Activated CD4-positive, alpha-beta memory T cell treated with anti-CD3 and anti-CD28 coated beads for 36 hours (primary cell): ENCODE measurements at regions of chr12 and their contacts with region 1.

Region 1: GRCh38 chr12:14239350-14239934 is 126.0 kb upstream of the ATF7IP start:
- DNase-seq: peak; percentile 62
- H3K4me3 Mint-ChIP-seq: peak overlapping the region; percentile 69
- H3K27ac Mint-ChIP-seq: peak overlapping the region; percentile 74
- H3K4me1 Mint-ChIP-seq: peaks cover 24% of the 10 kb centered on the region
- H3K27me3 Mint-ChIP-seq: no peaks in the 10 kb centered on the region

Region 2: GRCh38 chr12:14185427-14186192 is 53.8 kb before region 1 on chr12:
- CTCF ChIA-PET with region 1: interaction called, 15 read pairs
- POLR2A ChIA-PET with region 1: no interaction called
- intact Hi-C with region 1: no loop called
- DNase-seq: peak; percentile 24
- H3K4me3 Mint-ChIP-seq: no peak overlapping the region
- H3K27ac Mint-ChIP-seq: no peak overlapping the region
- H3K4me1 Mint-ChIP-seq: no peaks in the 10 kb centered on the region
- H3K27me3 Mint-ChIP-seq: peaks cover 6% of the 10 kb centered on the region

Region 3: DNA sequence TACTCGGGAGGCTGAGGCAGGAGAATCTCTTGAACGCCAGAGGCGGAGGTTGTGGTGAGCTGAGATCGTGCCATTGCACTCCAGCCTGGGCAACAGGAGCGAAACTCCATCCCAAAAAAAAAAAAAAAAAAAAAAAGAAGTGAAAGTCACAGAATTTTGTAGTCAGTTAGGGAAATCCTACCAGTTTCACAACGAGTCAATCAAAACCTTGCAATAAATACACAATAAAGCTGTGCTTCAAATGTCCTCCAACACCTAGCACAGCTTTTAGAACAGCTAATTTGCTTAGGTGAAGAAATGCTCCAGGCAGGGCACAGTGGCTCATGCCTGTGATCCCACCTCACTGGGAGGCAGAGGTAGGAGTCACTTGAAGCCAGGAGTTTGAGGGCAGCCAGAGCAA is 13.3 kb after region 1 on chr12:
- CTCF ChIA-PET with region 1: interaction called, 19 read pairs
- POLR2A ChIA-PET with region 1: interaction called, 3 read pairs
- intact Hi-C with region 1: loop called (anchors 1 kb)
- DNase-seq: no peak
- H3K4me3 Mint-ChIP-seq: no peak overlapping the region
- H3K27ac Mint-ChIP-seq: no peak overlapping the region
- H3K4me1 Mint-ChIP-seq: peaks cover 36% of the 10 kb centered on the region
- H3K27me3 Mint-ChIP-seq: no peaks in the 10 kb centered on the region

Region 4: GRCh38 chr12:14322403-14322802 is 83.0 kb after region 1 on chr12:
- CTCF ChIA-PET with region 1: no interaction called
- POLR2A ChIA-PET with region 1: no interaction called
- intact Hi-C with region 1: no loop called
- DNase-seq: no peak
- H3K4me3 Mint-ChIP-seq: no peak overlapping the region
- H3K27ac Mint-ChIP-seq: no peak overlapping the region
- H3K4me1 Mint-ChIP-seq: no peaks in the 10 kb centered on the region
- H3K27me3 Mint-ChIP-seq: no peaks in the 10 kb centered on the region

Region 5: DNA sequence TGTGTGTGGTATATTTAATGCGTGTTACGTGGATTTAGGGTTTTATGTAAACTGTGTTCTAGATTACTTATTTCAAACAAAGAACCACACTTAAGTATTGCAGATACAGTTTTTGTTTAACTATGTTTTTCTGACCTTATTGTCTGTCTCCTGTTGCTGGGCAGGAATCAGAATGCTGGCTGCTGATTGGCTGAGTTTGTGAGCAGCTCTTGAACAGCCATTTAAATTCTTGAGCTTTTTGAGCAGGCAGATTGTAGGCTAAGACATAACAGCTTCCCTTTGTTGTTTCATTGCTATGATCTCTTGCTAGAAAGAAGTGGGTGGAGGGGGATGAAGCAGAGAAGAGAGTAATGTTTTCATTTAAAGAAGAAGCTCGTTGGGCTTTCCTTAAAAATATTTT is 178.3 kb after region 1 on chr12:
- CTCF ChIA-PET with region 1: interaction called, 23 read pairs
- POLR2A ChIA-PET with region 1: no interaction called
- intact Hi-C with region 1: loop called (anchors 1 kb)
- DNase-seq: peak; percentile 85
- H3K4me3 Mint-ChIP-seq: peak overlapping the region; percentile 69
- H3K27ac Mint-ChIP-seq: peak overlapping the region; percentile 94
- H3K4me1 Mint-ChIP-seq: peaks cover 63% of the 10 kb centered on the region
- H3K27me3 Mint-ChIP-seq: no peaks in the 10 kb centered on the region

Region 6: GRCh38 chr12:14431975-14432374 is 192.5 kb after region 1 on chr12:
- CTCF ChIA-PET with region 1: no interaction called
- POLR2A ChIA-PET with region 1: no interaction called
- intact Hi-C with region 1: no loop called
- DNase-seq: no peak
- H3K4me3 Mint-ChIP-seq: no peak overlapping the region
- H3K27ac Mint-ChIP-seq: peak overlapping the region; percentile 49
- H3K4me1 Mint-ChIP-seq: peaks cover 60% of the 10 kb centered on the region
- H3K27me3 Mint-ChIP-seq: no peaks in the 10 kb centered on the region

Region 7: DNA sequence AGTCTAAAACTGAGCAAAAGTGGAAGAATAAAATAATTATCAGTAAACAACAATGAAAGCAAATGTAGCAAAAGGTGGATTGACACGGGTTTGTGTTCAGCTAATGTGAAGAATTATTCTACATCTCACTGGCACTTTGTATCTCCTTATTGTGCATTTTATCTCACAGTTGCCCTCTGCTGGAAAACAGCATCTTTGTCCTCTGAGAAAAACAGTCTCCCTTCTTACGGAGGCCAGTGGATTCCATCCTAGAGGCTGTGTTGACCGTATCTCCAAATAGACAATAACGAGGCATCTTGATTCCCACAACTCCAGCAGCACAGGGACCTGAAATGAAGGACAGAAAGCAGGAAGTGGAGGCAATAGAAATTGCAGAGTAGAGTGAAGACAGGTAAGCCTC is 379.5 kb after region 1 on chr12:
- CTCF ChIA-PET with region 1: interaction called, 17 read pairs
- POLR2A ChIA-PET with region 1: no interaction called
- intact Hi-C with region 1: loop called (anchors 1 kb)
- DNase-seq: no peak
- H3K4me3 Mint-ChIP-seq: no peak overlapping the region
- H3K27ac Mint-ChIP-seq: no peak overlapping the region
- H3K4me1 Mint-ChIP-seq: no peaks in the 10 kb centered on the region
- H3K27me3 Mint-ChIP-seq: peaks cover 14% of the 10 kb centered on the region

Region 8: DNA sequence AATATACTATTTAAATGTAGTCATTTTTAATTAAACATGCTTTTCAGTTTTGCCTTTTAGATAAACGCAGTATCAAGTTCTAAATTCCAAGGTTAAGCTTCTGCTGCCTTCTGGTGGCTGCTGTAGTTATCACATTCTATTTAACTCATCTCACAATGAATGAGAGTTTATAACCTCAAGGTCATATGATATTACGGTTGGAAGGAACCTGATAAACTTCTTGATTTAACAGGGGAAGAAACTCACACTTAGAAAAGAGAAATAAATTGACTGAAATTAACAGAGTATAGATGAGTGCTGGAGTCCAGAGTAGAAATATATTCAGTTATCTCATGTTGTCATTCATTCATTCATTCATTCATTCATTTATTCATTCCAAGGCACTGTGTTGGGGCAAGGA is 425.1 kb after region 1 on chr12:
- CTCF ChIA-PET with region 1: interaction called, 26 read pairs
- POLR2A ChIA-PET with region 1: no interaction called
- intact Hi-C with region 1: loop called (anchors 1 kb)
- DNase-seq: peak; percentile 15
- H3K4me3 Mint-ChIP-seq: no peak overlapping the region
- H3K27ac Mint-ChIP-seq: no peak overlapping the region
- H3K4me1 Mint-ChIP-seq: peaks cover 7% of the 10 kb centered on the region
- H3K27me3 Mint-ChIP-seq: no peaks in the 10 kb centered on the region